HepG2 (cell line): ENCODE measurements at regions of chr12 and their contacts with region 1.

Region 1: GRCh38 chr12:62603061-62603810 is 136.6 kb downstream of the MON2 start:
- DNase-seq: peak; percentile 76
- ATAC-seq: peak; percentile 93
- H3K4me3 ChIP-seq: peak overlapping the region; percentile 63 to 88 (median 76)
- H3K27ac ChIP-seq: peak overlapping the region; percentile 99
- H3K4me1 ChIP-seq: peaks cover 31% of the 10 kb centered on the region
- H3K27me3 ChIP-seq: no peaks in the 10 kb centered on the region; a peak in 1 of 5 replicates
- CTCF ChIP-seq: peak; percentile 74
- EP300 ChIP-seq: no peak
- POLR2A ChIP-seq: peak; percentile 63 to 81
- RAD21 ChIP-seq: peak; percentile 75

Region 2: DNA sequence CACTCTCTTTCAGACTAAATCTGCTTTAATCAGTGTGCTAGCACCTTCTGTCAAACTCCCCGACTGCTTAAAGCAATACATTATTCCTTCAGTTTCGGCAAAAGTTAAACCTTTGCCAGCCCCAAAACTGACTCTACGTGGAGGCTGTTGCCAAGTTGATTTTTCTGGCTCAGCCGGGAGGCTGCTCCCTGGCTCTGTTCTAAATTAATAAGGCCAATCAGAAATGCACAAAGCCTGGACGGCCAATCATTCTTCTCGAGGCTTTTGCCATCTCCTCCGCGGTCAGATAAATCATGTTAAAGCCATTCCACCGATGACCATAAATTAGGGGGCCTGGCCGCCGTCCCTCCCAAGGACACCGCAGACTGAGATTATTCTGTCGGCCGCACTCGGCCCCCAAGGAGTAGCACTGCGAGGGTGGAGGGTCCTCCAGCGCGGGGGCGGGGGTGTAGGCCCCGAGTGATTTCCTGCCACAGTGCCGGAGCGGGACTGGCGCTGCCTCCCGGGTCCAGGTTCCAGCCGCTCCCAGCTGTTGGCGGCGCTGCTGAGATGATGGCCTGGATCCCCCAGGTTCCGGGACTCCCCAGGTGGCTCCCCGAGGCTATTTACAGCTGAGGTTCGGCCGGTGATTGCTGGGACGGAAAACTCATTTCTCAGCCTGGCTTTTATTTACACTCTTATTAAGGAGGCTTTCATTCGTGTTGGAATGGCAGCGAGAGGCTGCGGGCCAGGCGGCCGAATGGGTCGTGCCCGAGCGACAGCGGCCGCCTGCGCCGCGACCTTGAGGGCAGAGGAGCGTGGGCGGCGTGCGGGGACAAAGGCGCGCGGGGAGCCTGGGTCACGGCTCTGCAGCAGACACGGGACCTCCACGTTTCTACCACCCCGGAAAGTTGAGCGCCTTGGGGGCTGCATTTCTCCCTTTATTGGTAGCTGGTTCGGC is 28.5 kb after region 1 on chr12:
- CTCF ChIA-PET with region 1: no interaction called
- POLR2A ChIA-PET with region 1: interaction called, 16 read pairs
- in situ Hi-C with region 1: no loop called
- intact Hi-C with region 1: no loop called
- DNase-seq: peak; percentile 25
- ATAC-seq: peak; percentile 92
- H3K4me3 ChIP-seq: peak overlapping the region; percentile 68 to 75 (median 69)
- H3K27ac ChIP-seq: no peak overlapping the region
- H3K4me1 ChIP-seq: peaks cover 47% of the 10 kb centered on the region
- H3K27me3 ChIP-seq: no peaks in the 10 kb centered on the region; a peak in 1 of 5 replicates
- CTCF ChIP-seq: peak; percentile 77
- EP300 ChIP-seq: no peak
- POLR2A ChIP-seq: no peak
- RAD21 ChIP-seq: peak; percentile 48

Region 3: GRCh38 chr12:62744551-62744950 is 141.3 kb after region 1 on chr12:
- CTCF ChIA-PET with region 1: no interaction called
- POLR2A ChIA-PET with region 1: no interaction called
- in situ Hi-C with region 1: no loop called
- intact Hi-C with region 1: no loop called
- DNase-seq: no peak
- ATAC-seq: no peak
- H3K4me3 ChIP-seq: no peak overlapping the region
- H3K27ac ChIP-seq: no peak overlapping the region
- H3K4me1 ChIP-seq: no peaks in the 10 kb centered on the region
- H3K27me3 ChIP-seq: no peaks in the 10 kb centered on the region
- CTCF ChIP-seq: no peak
- EP300 ChIP-seq: no peak
- POLR2A ChIP-seq: no peak
- RAD21 ChIP-seq: no peak